ENCODE measurements at regions of chr11 and their contacts with region 1.

Region 1: DNA sequence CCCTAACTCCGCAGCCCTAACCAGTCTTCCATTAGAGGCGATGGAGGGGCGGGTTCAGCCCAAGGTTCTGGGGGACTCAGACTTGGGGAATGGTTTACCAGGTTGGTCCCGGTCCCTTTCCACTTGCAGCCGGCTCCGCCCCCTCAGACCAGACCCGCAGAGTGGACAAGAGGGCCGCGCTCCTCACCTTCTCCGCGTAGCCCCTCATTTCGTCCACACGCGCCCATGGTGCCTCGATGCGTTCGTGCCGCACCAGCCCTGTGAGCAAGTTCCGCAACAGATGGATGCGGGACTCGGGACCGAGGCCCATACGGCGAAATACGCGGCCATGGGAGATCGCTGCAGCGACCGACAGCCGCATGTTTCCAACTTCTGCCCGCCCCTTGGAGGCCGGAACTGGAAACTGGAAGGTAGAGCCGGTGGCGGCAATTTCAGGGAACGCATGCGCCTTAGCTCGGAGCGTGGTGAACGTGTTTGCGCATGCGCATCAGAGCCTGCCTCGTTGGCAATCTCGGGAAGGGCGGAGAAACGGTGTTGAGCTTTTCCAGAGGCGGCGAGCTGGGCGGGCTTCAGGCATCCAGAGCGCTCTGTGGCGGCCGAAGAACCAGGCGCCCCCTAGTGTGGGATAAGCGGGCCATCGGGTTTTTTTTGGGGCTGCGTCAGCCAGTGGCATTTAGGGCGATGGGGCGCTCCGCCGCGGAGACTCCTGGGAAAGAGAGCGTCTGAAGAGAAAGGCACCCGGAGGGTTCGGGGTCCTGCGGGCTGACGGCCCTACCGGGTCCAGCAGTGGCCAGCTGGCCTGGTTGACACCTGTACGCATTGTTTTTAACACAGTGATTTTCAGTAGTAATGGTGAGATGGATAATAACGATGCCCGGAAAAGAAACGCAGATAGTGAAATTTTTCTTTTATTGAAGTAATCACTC is at the start of gene MRPL17:
- DNase-seq: peak; percentile 100
- ATAC-seq: peak; percentile 100
- H3K4me3 ChIP-seq: peak within 1 kb of the TSS; percentile 48 to 77
- H3K27ac ChIP-seq: peak within 1 kb of the TSS in 1 of 2 donors; percentile 93
- H3K4me1 ChIP-seq: peaks cover 0 to 1% of the 10 kb centered on the region in 2 donors
- H3K27me3 ChIP-seq: no peaks in the 10 kb centered on the region
- total RNA-seq, gene MRPL17: 27.5 to 30.1 TPM

Region 2: DNA sequence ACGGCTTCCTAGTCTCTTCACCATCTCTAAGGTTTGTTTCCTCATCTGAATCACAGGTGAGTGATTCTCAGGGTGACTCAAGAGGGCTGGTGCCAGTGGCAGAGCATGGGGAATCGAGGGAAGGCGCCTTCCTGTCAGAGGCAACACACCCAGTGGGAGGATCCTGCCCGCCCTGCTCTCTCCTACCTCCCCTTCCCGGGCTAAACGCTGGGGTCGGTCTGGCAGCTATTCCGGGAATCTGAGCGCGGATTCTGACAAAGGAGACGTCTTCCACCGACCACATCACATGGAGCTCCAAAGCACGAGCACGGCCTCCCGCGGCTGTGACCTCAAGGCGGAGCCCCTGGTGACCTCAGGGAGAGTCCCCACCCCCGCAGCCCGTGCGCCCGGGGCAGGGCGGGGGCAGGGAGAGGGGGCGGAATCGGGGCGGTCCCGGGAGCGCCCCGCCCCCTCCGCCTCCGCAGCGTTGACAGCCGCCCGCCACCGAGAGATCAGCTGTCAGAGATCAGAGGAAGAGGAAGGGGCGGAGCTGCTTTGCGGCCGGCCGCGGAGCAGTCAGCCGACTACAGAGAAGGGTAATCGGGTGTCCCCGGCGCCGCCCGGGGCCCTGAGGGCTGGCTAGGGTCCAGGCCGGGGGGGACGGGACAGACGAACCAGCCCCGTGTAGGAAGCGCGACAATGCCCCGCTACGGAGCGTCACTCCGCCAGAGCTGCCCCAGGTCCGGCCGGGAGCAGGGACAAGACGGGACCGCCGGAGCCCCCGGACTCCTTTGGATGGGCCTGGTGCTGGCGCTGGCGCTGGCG is 293.1 kb before region 1 on chr11 and contains the start of gene SMPD1:
- intact Hi-C with region 1: loop called in 1 of 2 experiments (anchors 10 kb)
- DNase-seq: peak; percentile 96 to 97
- ATAC-seq: peak; percentile 97
- H3K4me3 ChIP-seq: peak within 1 kb of the TSS; percentile 61 to 71
- H3K27ac ChIP-seq: peak within 1 kb of the TSS; percentile 31 to 80
- H3K4me1 ChIP-seq: no peaks in the 10 kb centered on the region
- H3K27me3 ChIP-seq: no peaks in the 10 kb centered on the region
- total RNA-seq, gene SMPD1: 29.2 to 40.4 TPM

Region 3: DNA sequence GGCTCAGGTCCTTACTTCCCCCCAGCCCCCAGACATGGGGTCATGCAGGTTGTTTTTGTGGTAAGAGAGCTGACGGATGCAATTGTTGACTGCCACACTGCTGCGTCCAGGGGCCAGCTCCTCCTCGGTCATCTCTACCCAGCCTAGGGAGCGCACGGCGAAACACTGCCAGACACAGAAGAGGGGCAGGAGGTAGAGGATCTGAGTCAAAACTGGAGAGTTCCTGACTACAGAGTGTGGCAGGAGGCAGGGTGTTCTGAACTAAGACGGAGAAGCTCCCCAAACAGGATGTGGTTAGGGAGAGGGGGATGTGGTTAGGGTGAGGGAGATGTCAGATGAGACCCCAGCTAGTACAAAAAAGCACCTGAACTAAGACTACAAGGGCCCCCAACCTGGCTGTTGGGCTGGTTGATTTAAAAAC is 280.6 kb before region 1 on chr11:
- intact Hi-C with region 1: no loop called
- DNase-seq: no peak
- ATAC-seq: no peak
- H3K4me3 ChIP-seq: no peak overlapping the region
- H3K27ac ChIP-seq: no peak overlapping the region
- H3K4me1 ChIP-seq: no peaks in the 10 kb centered on the region
- H3K27me3 ChIP-seq: no peaks in the 10 kb centered on the region

Region 4: GRCh38 chr11:6481012-6481923 is 201.9 kb before region 1 on chr11 and contains the starts of genes ARFIP2 and TIMM10B:
- intact Hi-C with region 1: loop called in 1 of 2 experiments (anchors 5 kb)
- DNase-seq: peak; percentile 100
- ATAC-seq: peak; percentile 97
- H3K4me3 ChIP-seq: peak within 1 kb of the TSS; percentile 68 to 78
- H3K27ac ChIP-seq: peak within 1 kb of the TSS; percentile 63 to 75
- H3K4me1 ChIP-seq: peaks cover 0 to 2% of the 10 kb centered on the region in 2 donors
- H3K27me3 ChIP-seq: no peaks in the 10 kb centered on the region
- total RNA-seq, gene ARFIP2: 40.8 to 46.0 TPM
- total RNA-seq, gene TIMM10B: 31.1 to 37.3 TPM

Region 5: GRCh38 chr11:6531267-6531752 is 151.9 kb before region 1 on chr11:
- intact Hi-C with region 1: loop called in 1 of 2 experiments (anchors 5 kb)
- DNase-seq: no peak
- ATAC-seq: no peak
- H3K4me3 ChIP-seq: no peak overlapping the region
- H3K27ac ChIP-seq: no peak overlapping the region
- H3K4me1 ChIP-seq: no peaks in the 10 kb centered on the region
- H3K27me3 ChIP-seq: no peaks in the 10 kb centered on the region

Region 6: DNA sequence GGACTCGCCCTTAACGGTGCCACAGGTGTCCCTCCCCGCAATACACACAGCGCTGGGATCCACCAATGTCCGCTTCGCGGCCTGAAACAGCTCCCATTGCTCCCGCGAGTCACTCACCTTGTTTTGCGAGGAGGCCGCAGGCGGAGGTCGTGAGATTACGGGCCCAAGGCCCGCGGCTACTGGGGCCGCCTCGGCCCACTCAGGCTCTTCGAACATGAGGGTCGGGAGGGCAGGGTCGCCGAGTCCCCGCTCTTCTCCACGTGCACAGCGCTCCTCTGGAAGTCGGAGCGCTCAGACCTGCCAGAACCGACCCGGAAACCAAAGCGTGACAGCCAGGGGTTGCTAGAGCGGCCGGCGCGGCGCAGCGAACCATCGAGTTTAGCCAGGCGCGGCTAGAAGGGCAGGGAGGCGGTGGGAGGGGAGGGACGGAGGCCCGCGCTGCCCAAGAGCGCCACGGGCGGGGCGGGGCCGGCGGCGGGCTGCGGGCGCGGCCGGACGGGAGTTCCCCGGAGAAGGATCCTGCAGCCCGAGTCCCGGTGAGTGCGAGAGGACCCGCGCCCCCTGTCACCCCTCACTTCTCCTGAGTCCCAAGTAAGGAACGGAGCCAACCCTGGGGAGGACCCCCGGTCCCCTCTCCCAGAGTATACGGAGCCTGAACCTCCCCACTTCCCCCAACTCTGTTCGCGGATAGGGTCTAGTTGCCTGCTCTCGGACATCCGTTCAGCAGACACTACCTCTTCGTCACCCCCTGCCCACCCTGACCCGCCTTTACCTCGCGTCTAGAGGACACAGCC is 79.7 kb before region 1 on chr11 and contains the starts of genes ILK and RRP8:
- intact Hi-C with region 1: loop called in 1 of 2 experiments (anchors 5 kb)
- DNase-seq: peak; percentile 95 to 97
- ATAC-seq: peak; percentile 94
- H3K4me3 ChIP-seq: peak within 1 kb of the TSS; percentile 80 to 92
- H3K27ac ChIP-seq: peak within 1 kb of the TSS; percentile 98
- H3K4me1 ChIP-seq: peaks cover 7% of the 10 kb centered on the region in 2 donors
- H3K27me3 ChIP-seq: no peaks in the 10 kb centered on the region
- total RNA-seq, gene ILK: 336 to 562 TPM
- total RNA-seq, gene RRP8: 18.8 to 22.2 TPM

Region 7: DNA sequence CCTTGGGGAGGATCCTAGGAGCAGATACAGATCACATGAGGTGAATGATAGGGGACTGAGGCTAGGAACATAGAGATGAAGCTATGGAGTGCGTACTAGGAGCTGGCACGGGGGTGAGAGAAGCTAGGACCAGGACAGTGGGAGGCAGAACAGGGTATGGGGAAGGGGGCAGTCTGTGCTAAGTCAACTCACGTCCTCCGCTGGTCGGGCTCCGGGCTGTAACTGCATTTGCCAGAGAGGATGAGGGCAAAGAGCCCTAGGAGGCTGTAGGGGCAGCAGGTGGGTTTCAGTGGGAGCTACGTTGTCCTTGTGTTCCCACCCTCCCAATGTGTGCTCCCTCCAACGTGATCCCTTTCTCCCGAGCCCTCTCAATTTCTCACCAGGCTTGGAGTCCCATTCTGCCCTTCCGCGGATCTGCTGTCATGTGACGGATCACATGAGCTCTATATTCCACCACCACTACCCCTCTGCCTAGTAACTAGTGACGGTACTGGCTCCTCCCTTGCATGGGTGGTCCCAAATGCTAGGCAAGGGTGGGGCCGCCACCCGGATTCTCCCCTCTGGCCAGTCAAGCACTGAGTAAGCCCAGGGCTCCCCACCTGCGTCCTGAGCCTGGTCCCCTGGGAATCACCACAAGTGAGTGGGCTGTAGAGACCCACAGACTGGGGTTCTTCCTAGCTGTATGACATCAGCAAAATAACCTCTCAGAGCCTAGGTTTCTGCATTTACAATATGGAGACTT is 64.0 kb before region 1 on chr11 and contains the start of gene TPP1:
- intact Hi-C with region 1: loop called (anchors 1 to 5 kb)
- DNase-seq: peak; percentile 93 to 94
- ATAC-seq: peak; percentile 95
- H3K4me3 ChIP-seq: peak within 1 kb of the TSS; percentile 55 to 74
- H3K27ac ChIP-seq: peak within 1 kb of the TSS in 1 of 2 donors; percentile 65
- H3K4me1 ChIP-seq: no peaks in the 10 kb centered on the region
- H3K27me3 ChIP-seq: no peaks in the 10 kb centered on the region
- total RNA-seq, gene TPP1: 79.5 to 125 TPM

Region 8: GRCh38 chr11:6635082-6635932 is 47.9 kb before region 1 on chr11:
- intact Hi-C with region 1: loop called in 1 of 2 experiments (anchors 5 kb)
- DNase-seq: no peak
- ATAC-seq: peak; percentile 52
- H3K4me3 ChIP-seq: no peak overlapping the region
- H3K27ac ChIP-seq: no peak overlapping the region
- H3K4me1 ChIP-seq: no peaks in the 10 kb centered on the region
- H3K27me3 ChIP-seq: no peaks in the 10 kb centered on the region

Region 9: GRCh38 chr11:6693342-6694228 is 10.4 kb after region 1 on chr11:
- intact Hi-C with region 1: no loop called
- DNase-seq: peak in 1 of 2 donors; percentile 48
- ATAC-seq: no peak
- H3K4me3 ChIP-seq: no peak overlapping the region
- H3K27ac ChIP-seq: peak overlapping the region in 1 of 2 donors; percentile 51
- H3K4me1 ChIP-seq: peaks cover 2 to 10% of the 10 kb centered on the region in 2 donors
- H3K27me3 ChIP-seq: no peaks in the 10 kb centered on the region

Measured in aorta (tissue), 5 donors.